PC-3 (cell line): ENCODE measurements at regions of chr2 and their contacts with region 1.

Region 1: DNA sequence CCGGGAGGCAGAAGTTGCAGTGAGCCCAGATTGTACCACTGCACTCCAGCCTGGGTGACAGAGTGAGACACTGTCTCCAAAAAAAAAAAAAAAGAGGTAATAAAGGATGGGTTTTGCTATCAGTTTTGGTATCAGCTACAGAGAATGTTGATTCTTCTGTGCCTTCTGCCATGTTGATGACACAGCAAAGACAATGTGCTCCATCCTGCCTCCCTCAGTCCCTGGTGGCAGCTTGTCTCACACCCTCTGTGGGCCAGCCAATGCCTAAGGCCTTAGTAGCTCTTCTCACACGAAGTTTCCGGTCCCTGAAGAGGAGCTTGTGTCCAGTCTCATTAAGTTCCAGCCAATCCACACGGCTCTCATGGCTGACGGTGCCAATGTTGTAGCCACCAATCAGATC is 17.6 kb downstream of the IFT172 start:
- DNase-seq: no peak
- ATAC-seq: no peak
- H3K4me3 ChIP-seq: no peak overlapping the region
- H3K27ac ChIP-seq: no peak overlapping the region
- H3K4me1 ChIP-seq: no peaks in the 10 kb centered on the region
- H3K27me3 ChIP-seq: no peaks in the 10 kb centered on the region
- CTCF ChIP-seq: no peak

Region 2: GRCh38 chr2:27501042-27501441 is 29.1 kb after region 1 on chr2:
- CTCF ChIA-PET with region 1: no interaction called
- POLR2A ChIA-PET with region 1: no interaction called
- intact Hi-C with region 1: no loop called
- DNase-seq: peak; percentile 68
- ATAC-seq: no peak
- H3K4me3 ChIP-seq: no peak overlapping the region
- H3K27ac ChIP-seq: no peak overlapping the region
- H3K4me1 ChIP-seq: no peaks in the 10 kb centered on the region
- H3K27me3 ChIP-seq: no peaks in the 10 kb centered on the region
- CTCF ChIP-seq: no peak

Region 3: DNA sequence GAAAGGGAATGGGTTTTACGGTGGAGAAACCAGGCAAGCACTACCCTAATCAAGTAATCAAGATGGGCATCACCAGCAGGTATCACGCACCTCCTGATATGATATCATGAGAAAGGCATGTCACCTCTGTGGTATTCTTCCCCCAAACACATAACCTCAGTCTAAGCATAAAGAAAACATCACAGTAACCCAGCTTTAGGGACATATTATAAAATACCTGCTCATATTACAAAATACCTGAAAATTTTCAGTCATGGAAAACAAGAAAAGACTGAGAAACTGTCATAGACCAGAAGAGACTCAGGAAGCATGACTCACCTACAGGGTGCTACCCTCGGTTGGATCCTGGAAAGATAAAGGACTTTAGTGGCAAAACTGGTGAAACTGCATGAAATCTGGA is 55.2 kb after region 1 on chr2:
- CTCF ChIA-PET with region 1: no interaction called
- POLR2A ChIA-PET with region 1: interaction called, 10 read pairs
- intact Hi-C with region 1: no loop called
- DNase-seq: peak; percentile 75
- ATAC-seq: peak; percentile 79
- H3K4me3 ChIP-seq: no peak overlapping the region
- H3K27ac ChIP-seq: no peak overlapping the region
- H3K4me1 ChIP-seq: peaks cover 10% of the 10 kb centered on the region
- H3K27me3 ChIP-seq: no peaks in the 10 kb centered on the region
- CTCF ChIP-seq: no peak